Spleen (tissue), 13 donors: ENCODE measurements at regions of chr12 and their contacts with region 1.

Region 1: DNA sequence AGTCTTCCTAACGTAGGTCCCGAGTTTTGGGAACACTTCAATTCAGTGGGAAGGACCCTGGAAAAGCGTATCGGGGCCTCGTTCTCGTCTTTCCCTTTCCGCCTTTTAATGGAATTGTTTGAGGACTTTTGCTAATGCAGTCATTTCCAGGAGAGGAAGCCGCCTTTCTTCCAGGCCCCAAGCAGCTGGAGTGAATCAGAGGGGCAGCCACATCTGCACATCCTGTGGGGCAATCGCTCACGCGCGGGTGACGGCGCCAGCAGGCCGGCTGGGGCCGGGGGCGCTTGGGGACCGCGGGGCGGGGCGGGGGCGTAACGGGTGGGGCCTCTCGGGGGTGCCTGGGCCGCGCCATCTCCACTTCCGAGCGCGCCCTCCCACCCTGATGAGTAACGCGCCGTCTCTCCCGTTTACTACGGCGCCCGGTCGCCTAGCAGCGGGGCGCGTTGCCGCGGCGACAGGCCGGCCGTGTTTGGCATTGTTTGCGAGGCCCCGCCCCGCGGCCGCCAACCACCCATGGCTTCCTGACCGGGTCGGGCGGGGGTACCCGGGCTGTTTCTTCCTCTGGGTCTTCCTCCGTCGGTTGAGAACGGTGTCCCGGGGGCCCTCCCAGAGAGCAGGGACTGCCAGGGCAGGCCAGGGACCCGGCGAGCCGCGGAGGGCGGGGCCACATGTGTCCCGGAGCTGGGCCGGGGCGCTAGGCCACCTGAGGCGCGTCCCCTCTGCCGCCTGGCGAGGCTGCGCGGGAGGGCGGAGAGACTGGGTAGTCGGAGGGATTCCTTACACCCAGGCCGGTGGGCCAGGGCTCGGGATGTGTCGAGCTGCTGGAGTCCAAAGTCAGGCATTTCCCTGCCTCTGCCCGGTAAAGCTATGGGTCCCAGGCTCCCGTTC is 2.3 kb downstream of the GSG1 start:
- DNase-seq: peak; percentile 98
- H3K4me3 ChIP-seq: peak overlapping the region; percentile 37 to 78 (median 50)
- H3K27ac ChIP-seq: peak overlapping the region; percentile 85 to 96 (median 90)
- H3K4me1 ChIP-seq: peaks cover 24 to 67% (median 54%) of the 10 kb centered on the region in 6 donors
- H3K27me3 ChIP-seq: no peaks in the 10 kb centered on the region
- CTCF ChIP-seq: peak in 4 of 11 experiments; percentile 6 to 40 (median 23)
- POLR2A ChIP-seq: peak in 1 of 3 donors; percentile 51

Region 2: DNA sequence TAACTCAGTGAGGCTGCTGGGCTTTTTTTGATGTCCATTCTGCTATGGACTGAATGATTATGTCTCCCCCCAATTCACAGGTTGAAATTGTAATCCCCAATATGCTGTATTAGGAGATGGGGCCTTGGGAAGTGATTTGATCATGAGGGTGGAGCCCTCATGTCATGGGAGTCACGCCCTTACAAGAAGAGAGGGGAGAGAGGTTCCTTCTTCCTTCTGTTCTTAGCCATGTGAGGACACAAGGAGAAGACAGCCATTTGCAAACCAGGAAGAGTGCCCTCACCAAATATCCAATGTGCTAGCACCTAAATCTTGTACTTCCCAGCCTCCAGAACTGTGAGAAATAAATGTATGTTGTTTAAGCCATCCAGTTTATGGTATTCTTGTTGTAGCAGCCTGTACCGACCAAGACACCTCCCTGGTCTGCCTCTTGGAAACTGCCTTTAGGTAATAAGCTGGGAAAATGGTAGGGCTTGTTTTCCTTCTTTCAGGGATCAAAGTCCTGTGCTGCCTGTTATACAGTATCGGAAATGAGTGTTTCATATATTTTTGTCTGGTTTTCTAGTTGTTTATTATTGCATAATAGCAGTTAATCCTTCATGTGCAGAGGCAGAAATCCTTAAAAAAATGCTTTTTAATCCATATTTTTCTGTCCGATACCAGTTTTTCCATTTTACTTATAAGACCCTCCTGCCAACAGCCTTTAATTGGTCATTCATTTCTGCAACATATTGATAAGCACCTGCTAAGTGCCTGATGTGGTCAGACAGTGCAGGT is 728.0 kb before region 1 on chr12:
- intact Hi-C with region 1: no loop called
- DNase-seq: no peak
- H3K4me3 ChIP-seq: no peak overlapping the region
- H3K27ac ChIP-seq: no peak overlapping the region
- H3K4me1 ChIP-seq: peaks cover 0 to 21% (median 2%) of the 10 kb centered on the region in 6 donors
- H3K27me3 ChIP-seq: no peaks in the 10 kb centered on the region
- CTCF ChIP-seq: no peak
- POLR2A ChIP-seq: no peak

Region 3: GRCh38 chr12:13208533-13209435 is 107.7 kb after region 1 on chr12:
- intact Hi-C with region 1: loop called (anchors 5 kb)
- DNase-seq: no peak
- H3K4me3 ChIP-seq: no peak overlapping the region
- H3K27ac ChIP-seq: no peak overlapping the region
- H3K4me1 ChIP-seq: peaks cover 0 to 68% (median 19%) of the 10 kb centered on the region in 6 donors
- H3K27me3 ChIP-seq: no peaks in the 10 kb centered on the region
- CTCF ChIP-seq: peak in 5 of 11 experiments; percentile 14 to 41 (median 23)
- POLR2A ChIP-seq: no peak